AG04450 (cell line): ENCODE measurements at regions of chr2 and their contacts with region 1.

Region 1: DNA sequence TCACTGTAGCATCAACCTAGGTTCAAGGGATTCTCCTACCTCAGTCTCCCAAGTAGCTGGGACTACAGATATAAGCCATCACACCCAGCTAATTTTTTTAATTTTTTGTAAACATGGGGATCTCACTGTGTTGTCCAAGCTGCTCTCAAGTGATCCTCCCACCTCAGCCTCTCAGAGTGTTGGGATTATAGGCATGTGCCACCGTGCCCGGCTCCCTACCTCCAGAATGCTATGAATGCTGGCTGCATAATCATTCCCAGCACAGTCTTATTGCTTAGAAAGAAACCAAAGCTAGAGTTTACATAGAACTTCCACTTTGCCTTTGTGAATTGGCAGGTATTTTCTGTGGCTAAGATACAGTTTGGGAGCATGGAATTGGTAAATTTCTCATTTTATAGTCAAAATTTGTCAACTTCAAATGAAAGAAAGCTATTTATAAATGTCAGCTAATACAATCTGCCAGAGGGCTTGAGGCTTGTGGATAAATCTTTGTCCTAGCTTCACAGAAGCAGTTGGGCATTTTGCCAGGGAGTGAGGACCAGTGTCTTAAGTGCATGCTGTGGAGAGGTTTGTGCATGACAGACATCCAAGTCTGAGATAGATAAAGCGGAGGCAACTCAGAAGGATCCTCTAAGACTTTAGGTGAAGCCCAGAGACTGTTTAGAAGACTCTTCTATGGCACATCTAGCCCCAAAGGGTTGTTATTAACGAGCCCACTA is 175.4 kb downstream of the ANTXR1 start:
- DNase-seq: no peak
- H3K4me3 ChIP-seq: no peak overlapping the region
- H3K27ac ChIP-seq: no peak overlapping the region
- H3K27me3 ChIP-seq: no peaks in the 10 kb centered on the region
- CTCF ChIP-seq: no peak

Region 2: DNA sequence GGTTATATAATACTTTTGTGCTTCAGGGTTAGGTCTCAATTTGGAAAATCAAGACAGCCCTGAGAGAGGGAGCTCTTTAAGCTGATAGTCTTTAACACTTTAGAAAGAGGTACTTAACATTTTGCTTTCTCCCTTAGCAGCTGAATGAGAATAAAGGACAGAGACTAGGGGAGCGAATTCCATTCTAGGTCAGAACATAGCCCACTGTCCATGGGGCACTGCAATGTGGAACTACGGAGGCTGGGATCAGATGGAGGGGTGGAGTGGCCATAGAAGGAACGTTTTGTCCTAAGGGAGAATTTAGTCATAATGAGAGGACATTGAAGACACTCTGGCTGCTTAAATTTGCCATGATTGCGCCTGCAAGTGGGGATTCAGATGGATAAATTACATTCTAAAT is 236.4 kb before region 1 on chr2:
- CTCF ChIA-PET with region 1: interaction called, 10 read pairs
- POLR2A ChIA-PET with region 1: no interaction called
- DNase-seq: no peak
- H3K4me3 ChIP-seq: no peak overlapping the region
- H3K27ac ChIP-seq: no peak overlapping the region
- H3K27me3 ChIP-seq: no peaks in the 10 kb centered on the region
- CTCF ChIP-seq: no peak

Region 3: DNA sequence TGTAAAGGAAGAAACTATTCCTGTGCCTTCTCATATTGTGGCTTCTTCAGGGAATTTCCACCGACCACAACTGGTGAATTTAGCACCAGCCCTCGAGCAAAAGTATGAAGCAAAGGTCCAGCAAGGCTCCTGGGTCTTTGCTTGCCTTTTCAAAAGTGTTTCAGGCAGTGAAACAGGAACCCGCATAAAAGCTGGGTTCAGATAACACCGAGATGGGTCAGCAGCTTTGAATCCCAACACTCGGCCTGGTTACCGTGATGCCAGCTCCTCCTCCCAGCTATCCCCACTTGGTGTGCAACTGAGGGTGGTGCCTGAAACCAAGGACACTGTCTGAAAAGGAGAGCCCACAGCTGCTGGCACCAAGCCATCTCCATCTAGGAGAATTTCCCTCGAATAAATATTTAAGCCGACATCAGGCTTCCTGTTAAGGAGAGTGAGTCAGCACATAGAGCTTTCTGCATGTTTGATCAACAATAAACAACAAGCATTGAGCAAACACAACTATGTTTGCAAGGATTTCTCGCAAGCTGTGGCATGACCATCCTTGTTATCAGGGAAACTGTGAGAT is 105.8 kb before region 1 on chr2:
- CTCF ChIA-PET with region 1: no interaction called
- POLR2A ChIA-PET with region 1: no interaction called
- DNase-seq: peak; percentile 80
- H3K4me3 ChIP-seq: no peak overlapping the region
- H3K27ac ChIP-seq: peak overlapping the region; percentile 85
- H3K27me3 ChIP-seq: no peaks in the 10 kb centered on the region
- CTCF ChIP-seq: no peak

Region 4: GRCh38 chr2:69514406-69514805 is 326.1 kb after region 1 on chr2:
- CTCF ChIA-PET with region 1: no interaction called
- POLR2A ChIA-PET with region 1: no interaction called
- DNase-seq: peak; percentile 83
- H3K4me3 ChIP-seq: no peak overlapping the region
- H3K27ac ChIP-seq: peak overlapping the region; percentile 59
- H3K27me3 ChIP-seq: no peaks in the 10 kb centered on the region
- CTCF ChIP-seq: peak; percentile 22; the same call in 1 of the 2 replicates